ENCODE measurements at regions of chr3 and their contacts with region 1.

Region 1: DNA sequence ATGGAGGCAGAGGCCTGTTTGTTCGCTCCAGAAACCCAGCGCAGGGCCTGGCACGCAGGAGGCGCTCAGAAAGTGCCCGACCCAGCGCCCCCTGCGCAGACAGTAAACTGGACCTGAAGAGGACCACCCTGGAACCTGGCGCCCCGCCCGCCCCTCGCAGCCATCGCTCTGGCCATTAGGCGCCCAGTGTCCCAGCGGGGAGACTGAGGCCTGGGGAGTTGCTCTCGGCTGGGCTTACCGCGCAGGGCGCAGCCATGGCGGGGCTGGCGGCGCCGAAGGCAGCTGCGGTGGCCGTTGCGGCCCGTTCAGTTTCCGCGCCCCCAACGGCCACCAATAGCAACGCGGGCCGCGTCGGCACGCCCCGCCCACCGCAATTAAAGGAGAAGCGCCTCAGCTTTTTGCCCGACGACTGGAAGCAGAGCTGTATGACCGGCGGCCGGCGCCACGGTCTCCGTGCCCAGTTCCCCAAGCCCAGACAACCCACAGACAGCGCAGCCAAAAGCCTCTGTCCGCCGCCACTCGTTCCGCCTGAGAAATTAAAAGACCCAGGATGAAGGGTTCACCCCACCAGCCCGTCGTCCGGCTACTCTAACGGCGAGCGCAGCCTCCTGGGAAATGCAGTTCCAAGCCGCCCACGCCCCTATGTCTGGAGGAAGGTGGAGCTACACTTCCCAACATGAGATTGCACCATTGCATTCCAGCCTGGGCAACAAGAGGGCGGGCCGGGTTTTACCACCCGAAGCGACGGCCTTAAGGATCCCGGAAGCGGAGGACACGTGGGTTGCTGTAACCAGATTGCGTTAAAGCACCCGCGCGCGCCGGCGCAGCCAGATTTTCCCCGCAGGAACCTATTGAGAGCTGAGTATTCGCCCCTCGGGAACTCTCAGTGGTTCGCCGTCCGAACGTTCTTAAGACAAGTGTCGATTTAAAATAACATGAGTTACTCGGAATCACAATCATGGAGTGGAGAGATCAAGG is at the start of gene POC1A:
- DNase-seq: peak; percentile 99
- H3K4me3 Mint-ChIP-seq: peak within 1 kb of the TSS; percentile 93
- H3K27ac Mint-ChIP-seq: peak within 1 kb of the TSS; percentile 96
- H3K4me1 Mint-ChIP-seq: peaks cover 10% of the 10 kb centered on the region
- H3K27me3 Mint-ChIP-seq: no peaks in the 10 kb centered on the region
- CTCF ChIP-seq: no peak
- total RNA-seq, gene POC1A: 7.5 and 9.8 TPM in 2 replicates

Region 2: DNA sequence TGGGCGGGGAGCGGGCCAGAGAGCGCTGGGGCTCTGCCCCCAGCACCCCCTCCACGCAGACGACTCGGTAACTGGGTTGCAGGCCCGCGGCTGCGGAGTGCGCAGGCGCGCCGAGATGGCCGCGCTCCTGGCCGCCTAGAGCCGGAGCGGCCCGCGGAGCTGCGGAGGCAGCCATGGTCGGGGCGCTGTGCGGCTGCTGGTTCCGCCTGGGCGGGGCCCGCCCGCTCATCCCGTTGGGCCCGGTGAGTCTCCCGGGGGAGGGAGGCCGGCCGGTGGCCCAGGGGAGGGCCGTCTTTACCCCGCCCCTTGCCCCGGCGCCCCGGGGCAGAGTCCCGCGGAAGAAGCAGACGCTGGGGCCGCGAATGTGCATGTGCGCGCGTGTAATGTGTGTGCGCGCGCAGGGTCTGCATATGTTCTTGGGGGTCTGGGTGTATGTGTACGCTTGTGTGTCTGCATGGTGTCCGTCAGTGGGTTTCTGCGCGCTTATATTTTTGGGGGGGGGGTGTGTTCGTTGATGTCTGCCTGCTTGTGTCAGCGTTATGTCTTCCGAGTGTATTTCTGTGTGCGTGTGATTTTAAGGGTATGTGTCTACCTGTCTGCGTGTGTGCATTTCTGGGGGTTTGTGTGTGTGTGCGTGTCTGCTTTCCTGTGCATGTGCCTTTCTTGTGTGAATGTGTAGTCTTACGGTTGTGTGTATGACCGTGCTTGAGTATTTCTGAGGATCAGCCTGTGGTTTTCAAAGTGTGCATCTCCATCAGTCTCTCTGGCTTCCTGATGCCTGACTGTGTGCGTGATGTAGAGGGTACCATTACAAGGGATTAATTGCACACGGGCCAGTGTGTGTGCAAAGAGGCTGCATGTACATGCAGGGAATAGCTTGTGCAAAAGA is 179.2 kb before region 1 on chr3 and contains the start of gene ABHD14A:
- CTCF ChIA-PET with region 1: interaction called, 3 read pairs
- POLR2A ChIA-PET with region 1: interaction called, 10 read pairs
- intact Hi-C with region 1: no loop called
- DNase-seq: peak; percentile 72
- H3K4me3 Mint-ChIP-seq: peak within 1 kb of the TSS; percentile 99
- H3K27ac Mint-ChIP-seq: peak within 1 kb of the TSS; percentile 88
- H3K4me1 Mint-ChIP-seq: peaks cover 29% of the 10 kb centered on the region
- H3K27me3 Mint-ChIP-seq: no peaks in the 10 kb centered on the region
- CTCF ChIP-seq: no peak
- total RNA-seq, gene ABHD14A: 4.0 and 8.1 TPM in 2 replicates

Region 3: DNA sequence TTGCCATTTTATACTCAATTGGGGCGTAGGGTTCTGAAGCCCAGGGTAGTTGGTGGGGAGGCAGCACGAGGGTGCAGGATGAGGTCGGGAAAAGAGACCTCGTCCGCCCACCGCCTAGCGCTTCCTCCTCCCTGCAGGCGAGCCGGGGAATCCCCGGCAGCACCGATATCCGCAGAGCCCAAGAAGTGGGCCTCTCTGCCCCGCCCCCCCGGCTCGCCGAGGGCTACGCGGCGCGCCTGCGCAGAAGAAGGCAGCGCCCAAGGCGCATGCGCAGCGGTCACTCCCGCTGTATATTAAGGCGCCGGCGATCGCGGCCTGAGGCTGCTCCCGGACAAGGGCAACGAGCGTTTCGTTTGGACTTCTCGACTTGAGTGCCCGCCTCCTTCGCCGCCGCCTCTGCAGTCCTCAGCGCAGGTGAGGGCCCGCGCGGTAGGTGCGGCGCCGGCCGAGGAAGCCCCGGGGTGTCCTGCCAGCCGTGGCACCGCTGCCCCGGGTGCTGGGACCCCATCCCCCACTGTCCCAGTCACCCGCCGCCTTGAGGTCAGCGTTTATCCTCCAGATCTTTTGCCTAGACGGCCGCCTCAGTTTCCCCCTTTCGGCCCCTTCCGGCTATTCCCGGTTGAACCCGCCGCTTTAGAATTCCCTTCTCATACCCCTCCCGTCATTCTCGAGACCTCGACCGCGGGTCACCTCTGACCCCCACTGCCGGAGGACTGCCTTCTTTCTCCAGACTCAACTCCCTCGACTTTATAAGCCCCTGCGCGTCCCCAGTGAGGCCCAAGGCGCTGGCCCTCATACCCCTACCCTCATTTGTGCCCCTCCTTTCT is 43.6 kb after region 1 on chr3 and contains the start of gene ALAS1:
- CTCF ChIA-PET with region 1: interaction called, 6 read pairs
- POLR2A ChIA-PET with region 1: interaction called, 5 read pairs
- intact Hi-C with region 1: loop called (anchors 2 kb)
- DNase-seq: peak; percentile 84
- H3K4me3 Mint-ChIP-seq: peak within 1 kb of the TSS; percentile 97
- H3K27ac Mint-ChIP-seq: peak within 1 kb of the TSS; percentile 70
- H3K4me1 Mint-ChIP-seq: peaks cover 28% of the 10 kb centered on the region
- H3K27me3 Mint-ChIP-seq: no peaks in the 10 kb centered on the region
- CTCF ChIP-seq: no peak
- total RNA-seq, gene ALAS1: 29.2 and 35.7 TPM in 2 replicates

Region 4: DNA sequence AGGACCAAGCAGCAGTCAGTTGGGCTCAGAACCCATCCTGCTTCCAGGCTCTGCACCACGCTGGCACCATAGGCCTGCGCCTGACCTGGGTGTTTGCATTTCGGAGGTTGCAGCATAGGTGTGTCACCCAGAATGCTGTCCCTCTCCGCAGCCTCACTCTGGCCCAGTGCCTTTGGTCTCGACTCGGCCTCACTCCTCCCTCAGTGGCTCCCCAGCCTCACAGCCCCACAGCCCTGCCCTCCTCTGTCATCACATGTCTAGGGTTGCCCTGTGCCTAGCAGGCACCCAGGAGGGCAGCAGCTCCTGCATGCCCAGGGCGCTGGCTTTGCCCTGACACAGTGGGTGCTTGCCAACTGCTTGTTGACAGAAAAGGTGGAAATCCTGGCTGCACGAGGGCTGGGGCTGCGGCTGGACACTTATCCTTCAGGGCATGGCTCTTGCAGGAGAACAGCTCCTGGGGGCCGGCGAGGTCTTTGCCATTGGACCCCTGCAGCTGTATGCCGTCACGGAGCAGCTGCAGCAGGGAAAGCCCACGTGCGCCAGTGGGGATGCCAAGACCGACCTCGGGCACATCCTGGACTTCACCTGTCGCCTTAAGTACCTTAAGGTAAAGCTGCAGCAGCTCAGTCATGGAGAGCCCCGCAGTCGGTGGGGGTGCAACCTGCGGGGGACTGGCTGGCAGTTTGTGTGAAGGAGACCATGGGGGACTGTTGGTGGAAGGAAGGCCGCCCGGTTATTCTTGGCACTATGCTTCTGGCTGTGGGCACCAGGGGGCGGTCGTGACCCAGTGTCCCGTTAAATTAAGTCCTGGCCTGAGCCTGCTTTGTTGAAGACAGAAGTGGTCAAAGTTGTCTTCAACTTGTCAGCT is 317.2 kb after region 1 on chr3:
- CTCF ChIA-PET with region 1: no interaction called
- POLR2A ChIA-PET with region 1: no interaction called
- intact Hi-C with region 1: no loop called
- DNase-seq: peak; percentile 67
- H3K4me3 Mint-ChIP-seq: no peak overlapping the region
- H3K27ac Mint-ChIP-seq: no peak overlapping the region
- H3K4me1 Mint-ChIP-seq: no peaks in the 10 kb centered on the region
- H3K27me3 Mint-ChIP-seq: no peaks in the 10 kb centered on the region
- CTCF ChIP-seq: peak; percentile 69